ENCODE measurements at regions of chr5 and their contacts with region 1.

Region 1: DNA sequence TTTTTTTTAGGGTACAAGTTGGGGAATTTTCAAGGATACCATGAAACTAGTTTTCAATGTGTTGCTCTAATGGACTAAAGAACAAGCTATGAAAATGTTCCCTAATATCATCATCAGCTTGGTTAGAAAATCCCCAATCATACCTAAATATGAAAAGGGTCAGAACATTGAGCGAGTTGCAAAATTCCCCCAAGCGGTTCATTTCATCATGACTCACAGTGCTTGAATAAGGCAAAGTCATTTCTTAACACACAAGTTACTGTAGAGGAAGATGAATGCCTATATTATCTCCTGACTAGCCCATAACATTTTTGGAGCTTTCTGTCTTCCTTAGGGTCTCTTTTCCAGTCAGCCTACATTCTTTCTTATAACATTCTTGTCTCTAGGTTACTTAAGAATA is 62.7 kb downstream of the ST8SIA4 start:
- DNase-seq: peak; percentile 70
- ATAC-seq: peak; percentile 87
- H3K4me3 Mint-ChIP-seq: peak overlapping the region; percentile 26
- H3K27ac Mint-ChIP-seq: peak overlapping the region; percentile 91
- H3K4me1 Mint-ChIP-seq: peaks cover 70% of the 10 kb centered on the region
- H3K27me3 Mint-ChIP-seq: no peaks in the 10 kb centered on the region
- CTCF ChIP-seq: no peak

Region 2: DNA sequence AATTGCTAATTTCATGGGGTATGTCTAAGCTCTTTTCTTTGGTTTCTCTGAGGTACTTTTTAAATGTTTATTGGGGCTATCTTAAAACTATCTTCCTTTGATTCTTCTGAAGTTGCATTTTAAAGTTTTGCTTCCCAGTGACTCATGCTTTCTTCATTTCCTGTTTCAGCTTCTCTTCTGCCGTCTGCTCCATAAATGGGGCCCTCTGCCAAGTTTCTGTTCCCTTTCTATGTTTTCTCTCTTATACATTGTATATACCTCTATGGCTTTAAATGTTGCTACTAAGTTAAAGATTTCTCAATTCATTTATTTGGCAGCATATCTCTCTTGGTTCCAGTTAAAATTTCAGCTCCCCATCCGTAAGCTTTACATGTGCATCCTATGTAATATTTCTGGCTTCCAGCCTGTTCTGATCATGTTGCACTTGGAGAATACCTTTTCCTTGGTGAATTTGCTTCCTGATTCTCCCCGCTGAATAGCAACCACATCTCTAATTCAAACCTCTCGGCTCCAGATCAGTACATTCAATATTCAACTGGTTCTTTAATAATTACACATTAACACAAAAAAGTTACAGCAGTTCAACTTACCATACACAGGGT is 62.6 kb before region 1 on chr5:
- CTCF ChIA-PET with region 1: interaction called, 6 read pairs
- POLR2A ChIA-PET with region 1: no interaction called
- intact Hi-C with region 1: loop called (anchors 5 kb)
- DNase-seq: peak; percentile 43
- ATAC-seq: peak; percentile 51
- H3K4me3 Mint-ChIP-seq: peak overlapping the region; percentile 26
- H3K27ac Mint-ChIP-seq: peak overlapping the region; percentile 88
- H3K4me1 Mint-ChIP-seq: peaks cover 45% of the 10 kb centered on the region
- H3K27me3 Mint-ChIP-seq: no peaks in the 10 kb centered on the region
- CTCF ChIP-seq: no peak

Region 3: GRCh38 chr5:100827481-100827889 is 12.9 kb before region 1 on chr5:
- CTCF ChIA-PET with region 1: interaction called, 11 read pairs
- POLR2A ChIA-PET with region 1: no interaction called
- intact Hi-C with region 1: no loop called
- DNase-seq: no peak
- ATAC-seq: peak; percentile 37
- H3K4me3 Mint-ChIP-seq: no peak overlapping the region
- H3K27ac Mint-ChIP-seq: peak overlapping the region; percentile 83
- H3K4me1 Mint-ChIP-seq: peaks cover 38% of the 10 kb centered on the region
- H3K27me3 Mint-ChIP-seq: no peaks in the 10 kb centered on the region
- CTCF ChIP-seq: no peak